Left colon (tissue), 2 donors: ENCODE measurements at regions of chr2 and their contacts with region 1.

Region 1: DNA sequence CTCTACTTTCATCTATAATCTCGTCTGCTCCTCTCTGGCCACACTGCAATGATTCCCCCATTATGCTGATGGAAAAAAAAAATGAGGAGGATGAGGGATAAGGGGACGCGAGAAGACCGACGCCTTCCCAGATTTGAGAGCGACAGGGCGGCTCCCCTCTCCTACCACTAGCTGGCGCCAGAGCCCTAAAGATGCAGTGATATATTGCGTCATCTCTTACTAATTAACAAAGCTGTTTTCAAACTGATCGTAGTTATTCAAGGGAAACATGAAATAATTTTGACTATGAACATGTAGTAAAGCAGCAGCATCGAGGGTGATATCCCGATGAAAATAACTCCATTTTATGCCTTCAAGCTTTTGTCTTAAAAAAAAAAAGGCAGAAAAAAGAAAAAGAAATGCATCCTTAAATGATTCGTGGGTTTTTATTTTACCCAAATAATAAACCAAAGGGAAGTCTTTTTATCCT is 48.0 kb upstream of the HNRNPA3 start:
- DNase-seq: peak; percentile 74 to 88
- ATAC-seq: peak; percentile 70

Region 2: GRCh38 chr2:177263451-177264208 is 99.0 kb after region 1 on chr2:
- intact Hi-C with region 1: loop called in 1 of 2 experiments (anchors 10 kb)
- DNase-seq: peak; percentile 98 to 100
- ATAC-seq: peak; percentile 66

Region 3: GRCh38 chr2:177296040-177296439 is 131.4 kb after region 1 on chr2:
- intact Hi-C with region 1: loop called in 1 of 2 experiments (anchors 10 kb)
- DNase-seq: no peak
- ATAC-seq: peak; percentile 70

Region 4: DNA sequence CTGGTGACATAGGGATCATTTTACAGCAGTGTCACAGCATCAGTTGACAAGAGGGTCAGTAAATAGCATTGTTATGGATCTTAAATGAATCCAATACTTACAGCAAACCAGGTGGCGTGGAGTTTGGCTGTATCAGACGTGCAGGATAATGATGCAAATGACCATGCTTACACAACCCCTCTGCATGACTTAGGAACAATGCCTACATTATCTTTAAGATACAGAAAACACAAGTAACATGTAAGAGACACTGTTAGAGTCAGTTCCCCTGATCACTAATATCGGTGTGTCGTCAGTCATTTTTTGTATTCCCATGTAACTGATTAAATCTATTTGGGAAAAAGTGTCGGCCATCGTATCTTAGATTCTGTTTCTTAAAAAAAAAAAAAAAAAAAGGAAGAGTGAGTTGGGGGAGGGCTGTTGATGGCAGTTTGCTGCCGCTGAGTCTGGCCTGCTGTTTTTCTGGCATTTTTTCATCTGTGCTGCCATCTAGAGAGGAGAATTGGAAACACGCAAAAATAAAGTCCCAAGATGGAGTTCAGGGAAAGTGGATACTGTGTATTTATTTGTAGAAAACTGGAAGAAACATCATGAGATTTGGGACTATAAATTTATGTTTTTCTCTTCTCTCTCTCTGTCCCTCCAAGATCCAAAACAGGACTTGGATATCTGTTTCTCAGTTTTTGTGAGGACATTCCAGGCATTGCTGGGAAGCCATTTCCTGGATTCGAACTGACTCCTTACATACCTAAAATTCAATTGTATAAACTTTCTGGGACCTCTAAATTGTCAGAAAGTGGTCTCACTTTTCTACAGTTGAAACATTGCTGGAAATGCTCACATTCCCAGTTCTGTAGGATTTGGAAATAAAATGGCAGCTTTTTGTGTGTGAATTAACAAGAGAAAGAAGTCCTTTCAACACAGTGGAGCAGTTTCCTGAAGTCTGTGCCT is 167.7 kb after region 1 on chr2:
- intact Hi-C with region 1: loop called (anchors 2 to 10 kb)
- DNase-seq: peak; percentile 38 to 41
- ATAC-seq: peak; percentile 79

Region 5: DNA sequence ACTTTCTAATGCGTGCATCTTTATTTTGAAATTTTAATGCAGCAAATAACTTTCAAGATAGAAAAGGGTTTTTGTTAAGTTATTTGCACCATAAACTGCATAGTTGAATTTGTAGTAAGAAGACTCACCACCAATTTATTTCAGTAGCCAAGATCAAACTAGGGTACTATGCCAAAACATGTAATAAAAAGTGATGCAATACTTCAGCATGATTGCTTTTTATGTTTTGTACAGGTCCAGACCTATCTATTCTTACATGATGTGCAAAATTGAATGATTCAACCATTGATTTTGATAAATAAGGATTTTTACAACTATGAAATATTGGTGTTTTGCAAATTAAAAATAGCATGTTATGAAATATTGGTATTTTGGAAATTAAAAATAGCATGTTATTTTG is 254.7 kb after region 1 on chr2:
- intact Hi-C with region 1: loop called in 1 of 2 experiments (anchors 10 kb)
- DNase-seq: no peak
- ATAC-seq: peak; percentile 42